Endothelial cell of umbilical vein (primary cell): ENCODE measurements at regions of chr2 and their contacts with region 1.

Region 1: DNA sequence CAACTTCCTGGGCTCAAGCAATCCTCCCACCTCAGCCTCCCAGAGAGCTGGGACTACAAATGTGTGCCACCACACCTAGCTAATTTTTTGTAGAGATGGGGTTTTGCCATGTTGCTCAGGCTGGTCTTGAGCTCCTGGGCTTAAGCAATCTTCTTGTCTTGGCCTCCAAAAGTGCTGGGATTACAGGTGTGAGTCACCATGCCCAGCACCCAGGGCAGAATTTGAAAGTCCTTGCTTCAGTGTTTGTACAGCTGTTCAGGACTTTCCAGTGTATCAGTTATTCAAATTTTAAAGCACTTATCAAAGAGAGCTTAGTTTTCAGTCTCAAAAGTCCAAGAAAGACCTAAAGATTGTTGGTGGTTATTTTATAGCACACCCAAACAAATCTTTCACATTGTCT is 43.6 kb upstream of the VPS54 start:
- DNase-seq: peak; percentile 65
- H3K4me3 ChIP-seq: no peak overlapping the region
- H3K27ac ChIP-seq: peak overlapping the region; percentile 99
- H3K4me1 ChIP-seq: peaks cover 24% of the 10 kb centered on the region
- H3K27me3 ChIP-seq: no peaks in the 10 kb centered on the region
- CTCF ChIP-seq: no peak
- POLR2A ChIP-seq: no peak

Region 2: DNA sequence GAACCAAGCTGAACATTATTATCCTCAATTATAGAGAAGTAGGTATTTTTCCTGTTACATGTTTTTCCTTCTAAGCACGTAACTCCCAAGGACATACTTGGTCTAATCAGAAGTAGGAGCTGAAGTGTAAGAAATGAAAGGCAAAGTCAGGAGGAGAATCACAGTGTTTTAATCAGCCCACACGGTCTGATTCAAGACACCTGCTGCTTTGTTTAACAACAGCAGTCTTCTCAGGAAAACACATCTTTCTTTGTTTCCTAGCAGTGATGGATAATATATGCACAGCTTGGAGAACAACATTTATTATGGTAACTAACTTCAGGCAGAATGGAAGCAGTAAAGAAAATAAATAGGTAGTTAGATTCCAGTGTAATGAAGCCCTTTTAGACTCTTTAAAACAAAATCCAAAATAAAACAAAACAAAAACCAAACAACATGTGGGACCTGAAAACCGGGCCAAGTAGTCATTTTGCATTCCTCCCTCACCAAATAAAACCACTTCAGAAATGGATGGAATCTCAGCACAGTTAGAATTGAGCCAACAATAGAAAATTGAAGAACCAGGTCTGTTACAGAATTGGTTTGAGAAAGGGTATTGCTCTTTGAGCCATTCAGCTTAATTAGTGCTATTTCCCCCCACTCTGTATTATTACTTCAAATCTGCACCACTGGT is 282.2 kb before region 1 on chr2:
- CTCF ChIA-PET with region 1: no interaction called
- POLR2A ChIA-PET with region 1: no interaction called
- dilution Hi-C with region 1: no loop called
- intact Hi-C with region 1: no loop called
- DNase-seq: no peak
- H3K4me3 ChIP-seq: no peak overlapping the region
- H3K27ac ChIP-seq: no peak overlapping the region
- H3K4me1 ChIP-seq: no peaks in the 10 kb centered on the region
- H3K27me3 ChIP-seq: no peaks in the 10 kb centered on the region
- CTCF ChIP-seq: no peak
- POLR2A ChIP-seq: no peak

Region 3: GRCh38 chr2:64052468-64053241 is 10.2 kb before region 1 on chr2:
- CTCF ChIA-PET with region 1: interaction called, 17 read pairs
- POLR2A ChIA-PET with region 1: interaction called, 3 read pairs
- dilution Hi-C with region 1: no loop called
- intact Hi-C with region 1: loop called (anchors 1 kb)
- DNase-seq: peak; percentile 94
- H3K4me3 ChIP-seq: peak overlapping the region in 1 of 3 experiments; percentile 20
- H3K27ac ChIP-seq: peak overlapping the region; percentile 96
- H3K4me1 ChIP-seq: peaks cover 28% of the 10 kb centered on the region
- H3K27me3 ChIP-seq: no peaks in the 10 kb centered on the region
- CTCF ChIP-seq: no peak
- POLR2A ChIP-seq: no peak

Region 4: DNA sequence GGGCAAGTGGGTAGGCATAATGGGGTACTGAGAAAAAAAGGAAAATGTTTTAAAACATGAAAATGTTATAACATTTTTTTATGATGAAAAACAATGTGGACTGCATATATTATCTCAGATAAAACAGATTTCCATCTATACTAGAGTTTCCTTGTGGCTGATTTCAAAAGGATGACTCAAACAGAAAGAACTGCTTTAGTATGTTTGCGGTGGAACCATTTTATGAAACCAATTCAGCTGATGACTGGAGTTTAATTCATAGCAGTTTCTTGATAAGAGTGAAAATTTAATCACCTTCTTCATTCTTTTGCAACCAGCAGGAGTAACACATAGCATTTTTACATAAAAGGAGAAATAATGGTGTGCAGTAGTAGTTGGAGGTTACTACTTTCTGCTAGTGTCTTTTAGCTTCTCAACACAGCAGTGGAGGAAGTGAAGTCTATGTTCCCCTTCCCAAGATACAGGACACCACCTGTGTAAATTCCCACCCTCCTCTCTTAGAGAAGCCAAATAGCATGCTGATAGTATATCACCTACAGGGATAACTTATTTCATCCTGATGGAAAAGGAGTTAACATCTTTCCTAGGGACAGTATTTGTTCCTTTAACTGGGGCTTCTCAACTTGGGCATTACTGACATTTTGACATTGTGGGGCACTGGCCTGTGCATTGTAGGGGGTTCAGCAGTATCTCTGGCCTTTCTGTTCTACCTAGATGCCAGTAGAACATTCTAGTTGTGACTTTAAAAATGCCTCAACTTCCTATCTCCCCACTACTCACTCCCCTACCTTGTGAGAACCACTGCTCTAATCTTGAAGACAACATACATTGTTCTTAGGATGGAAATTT is 51.5 kb after region 1 on chr2:
- CTCF ChIA-PET with region 1: no interaction called
- POLR2A ChIA-PET with region 1: no interaction called
- dilution Hi-C with region 1: no loop called
- intact Hi-C with region 1: loop called (anchors 1 kb)
- DNase-seq: peak; percentile 69
- H3K4me3 ChIP-seq: no peak overlapping the region
- H3K27ac ChIP-seq: peak overlapping the region; percentile 7
- H3K4me1 ChIP-seq: peaks cover 35% of the 10 kb centered on the region
- H3K27me3 ChIP-seq: no peaks in the 10 kb centered on the region
- CTCF ChIP-seq: no peak
- POLR2A ChIP-seq: no peak

Region 5: DNA sequence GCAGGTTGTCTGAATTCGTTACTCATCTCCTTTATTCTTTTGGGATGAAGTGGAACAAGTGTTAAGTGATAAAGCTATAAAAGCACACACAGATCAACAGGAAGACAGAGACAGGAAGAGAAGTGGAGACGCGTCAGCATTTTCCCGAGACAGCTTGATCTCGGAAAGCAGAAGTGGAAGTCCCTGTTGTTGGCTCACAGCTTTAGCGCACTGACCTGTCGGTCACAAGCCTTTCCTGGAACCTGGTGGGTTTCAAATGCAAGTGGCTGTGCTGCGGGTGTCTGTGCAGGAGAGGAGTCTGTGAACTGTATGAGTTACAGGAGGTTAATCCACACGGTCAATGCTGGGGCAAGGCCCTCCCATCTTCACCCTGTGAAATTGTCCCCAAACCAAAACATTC is 198.0 kb after region 1 on chr2:
- CTCF ChIA-PET with region 1: interaction called, 4 read pairs
- POLR2A ChIA-PET with region 1: interaction called, 14 read pairs
- dilution Hi-C with region 1: no loop called
- intact Hi-C with region 1: loop called (anchors 1 kb)
- DNase-seq: peak; percentile 82
- H3K4me3 ChIP-seq: peak overlapping the region in 1 of 3 experiments; percentile 2
- H3K27ac ChIP-seq: peak overlapping the region; percentile 99
- H3K4me1 ChIP-seq: peaks cover 44% of the 10 kb centered on the region
- H3K27me3 ChIP-seq: no peaks in the 10 kb centered on the region
- CTCF ChIP-seq: no peak
- POLR2A ChIP-seq: peak; percentile 48